ENCODE measurements at regions of chr9 and their contacts with region 1.

Region 1: GRCh38 chr9:70602321-70603019 is 188.0 kb upstream of the KLF9 start:
- DNase-seq: peak; percentile 79
- H3K4me3 ChIP-seq: no peak overlapping the region
- H3K27ac ChIP-seq: peak overlapping the region; percentile 83 to 88
- H3K4me1 ChIP-seq: peaks cover 22% of the 10 kb centered on the region
- H3K27me3 ChIP-seq: no peaks in the 10 kb centered on the region
- CTCF ChIP-seq: peak; percentile 63 to 89 (median 71)
- POLR2A ChIP-seq: no peak

Region 2: GRCh38 chr9:70352802-70353201 is 249.7 kb before region 1 on chr9:
- intact Hi-C with region 1: loop called (anchors 5 kb)
- DNase-seq: no peak
- H3K4me3 ChIP-seq: no peak overlapping the region
- H3K27ac ChIP-seq: no peak overlapping the region
- H3K4me1 ChIP-seq: no peaks in the 10 kb centered on the region
- H3K27me3 ChIP-seq: no peaks in the 10 kb centered on the region
- CTCF ChIP-seq: peak; percentile 33 to 41 (median 40)
- POLR2A ChIP-seq: no peak

Region 3: DNA sequence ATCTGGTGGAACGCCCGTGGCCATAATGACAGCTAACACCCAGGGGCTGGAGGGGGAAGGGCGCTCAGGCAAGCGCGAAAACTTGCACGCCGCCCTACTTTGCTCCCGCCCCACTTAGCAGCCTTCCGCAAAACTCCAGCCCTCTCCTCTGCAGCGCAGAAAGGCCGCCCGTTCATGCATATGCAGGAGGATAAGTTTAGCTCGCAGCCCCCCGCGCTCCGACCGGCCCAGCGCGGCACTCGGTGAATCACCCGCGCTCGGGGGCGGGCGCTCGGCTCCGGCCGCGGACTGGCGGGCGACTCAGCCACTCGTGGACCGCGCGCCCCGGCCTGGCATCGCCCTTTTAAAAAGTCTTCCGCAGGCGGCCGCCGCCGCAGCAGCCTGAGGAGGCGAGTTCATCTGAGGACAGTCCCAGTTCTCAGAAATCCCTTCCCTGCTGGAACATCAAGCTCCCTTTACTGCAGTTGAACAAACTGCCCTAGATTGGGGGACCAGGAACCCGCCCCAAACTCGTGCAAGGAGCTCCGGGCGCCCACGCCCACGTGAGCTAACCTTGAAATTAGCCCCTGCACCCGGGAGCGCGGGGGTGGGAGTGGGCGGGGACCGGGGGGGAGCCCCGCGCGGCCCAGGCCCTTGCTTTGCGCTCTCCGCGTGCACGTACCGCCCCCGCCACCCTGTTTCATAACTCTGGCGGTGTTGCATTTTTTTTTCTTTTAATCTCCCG is 183.5 kb before region 1 on chr9:
- intact Hi-C with region 1: loop called (anchors 2 kb)
- DNase-seq: peak; percentile 95
- H3K4me3 ChIP-seq: peak overlapping the region; percentile 48 to 68
- H3K27ac ChIP-seq: peak overlapping the region; percentile 98 to 99
- H3K4me1 ChIP-seq: peaks cover 32% of the 10 kb centered on the region
- H3K27me3 ChIP-seq: no peaks in the 10 kb centered on the region
- CTCF ChIP-seq: no peak
- POLR2A ChIP-seq: peak; percentile 55

Region 4: GRCh38 chr9:70553707-70554673 is 48.5 kb before region 1 on chr9:
- intact Hi-C with region 1: no loop called
- DNase-seq: no peak
- H3K4me3 ChIP-seq: no peak overlapping the region
- H3K27ac ChIP-seq: no peak overlapping the region
- H3K4me1 ChIP-seq: peaks cover 5% of the 10 kb centered on the region
- H3K27me3 ChIP-seq: no peaks in the 10 kb centered on the region
- CTCF ChIP-seq: no peak
- POLR2A ChIP-seq: no peak